A673 (cell line): ENCODE measurements at regions of chr6 and their contacts with region 1.

Region 1: DNA sequence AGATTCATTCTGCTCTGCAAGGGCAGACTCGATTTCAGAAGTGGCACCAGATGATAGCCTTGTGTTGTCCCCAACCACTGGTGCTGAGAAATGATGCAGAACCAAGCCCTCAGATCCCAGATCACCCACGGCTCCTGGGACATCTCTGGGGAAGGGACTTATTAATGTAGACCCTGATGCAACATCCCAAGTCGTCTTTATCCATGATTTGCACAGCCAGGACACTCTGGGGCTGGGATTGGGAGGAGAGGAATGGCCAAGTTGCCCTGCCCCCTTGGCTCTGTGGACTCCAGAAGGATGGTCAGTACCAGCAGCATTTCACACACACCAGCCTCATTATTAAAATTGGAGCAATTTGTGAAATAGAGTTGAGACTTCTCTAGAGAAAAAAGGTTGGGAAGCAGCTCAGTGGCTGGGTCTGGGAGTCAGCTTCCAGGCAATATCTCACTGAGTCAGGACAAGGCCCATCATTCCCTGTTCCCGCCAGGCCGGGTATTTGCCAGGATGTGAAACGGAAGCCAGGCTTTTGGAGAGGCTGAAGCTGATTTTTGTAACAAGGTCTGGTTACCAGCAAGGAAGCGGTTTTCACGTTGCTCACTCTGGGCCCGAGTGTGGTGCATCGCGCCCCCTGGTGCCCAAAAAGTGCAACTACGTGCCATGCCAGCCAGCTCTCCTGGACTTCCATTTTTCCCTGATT is 67.4 kb downstream of the ZBTB2 start:
- DNase-seq: peak; percentile 90
- H3K4me3 ChIP-seq: peak overlapping the region; percentile 74
- H3K27ac ChIP-seq: peak overlapping the region; percentile 75
- H3K4me1 ChIP-seq: peaks cover 24% of the 10 kb centered on the region
- H3K27me3 ChIP-seq: no peaks in the 10 kb centered on the region
- CTCF ChIP-seq: peak; percentile 97

Region 2: DNA sequence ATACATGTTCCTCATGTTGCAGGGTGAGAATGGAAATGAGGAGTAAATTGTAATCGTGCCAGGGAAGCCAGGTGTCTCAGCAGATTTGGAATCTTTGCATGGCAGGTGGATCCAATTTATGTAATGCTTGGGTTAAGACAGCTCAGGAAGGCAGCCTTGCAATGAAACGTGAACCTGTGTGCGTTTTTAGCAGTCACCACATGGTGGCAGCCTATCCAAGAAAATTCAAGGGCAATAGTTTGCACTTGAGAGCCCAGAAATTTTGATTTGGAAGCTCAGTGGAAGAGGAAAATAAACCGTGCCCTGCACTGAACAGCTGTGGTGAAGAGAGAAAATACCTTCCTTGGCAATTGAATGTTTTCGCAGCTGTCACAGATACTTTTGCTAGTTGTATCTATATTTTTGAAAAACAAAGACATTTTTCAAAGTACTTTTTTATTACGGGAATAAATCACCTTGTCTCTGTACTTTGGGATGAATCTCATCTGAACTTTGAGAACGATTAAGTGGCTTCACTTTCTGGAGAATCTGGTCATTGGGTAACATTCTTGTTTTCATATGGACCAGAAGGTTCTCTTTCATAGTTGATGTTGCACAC is 432.0 kb before region 1 on chr6:
- CTCF ChIA-PET with region 1: interaction called, 50 read pairs
- POLR2A ChIA-PET with region 1: no interaction called
- intact Hi-C with region 1: loop called (anchors 1 kb)
- DNase-seq: peak; percentile 81
- H3K4me3 ChIP-seq: no peak overlapping the region
- H3K27ac ChIP-seq: no peak overlapping the region
- H3K4me1 ChIP-seq: peaks cover 24% of the 10 kb centered on the region
- H3K27me3 ChIP-seq: no peaks in the 10 kb centered on the region
- CTCF ChIP-seq: peak; percentile 91

Region 3: GRCh38 chr6:151014404-151015100 is 309.4 kb before region 1 on chr6:
- CTCF ChIA-PET with region 1: interaction called, 54 read pairs
- POLR2A ChIA-PET with region 1: no interaction called
- intact Hi-C with region 1: loop called (anchors 2 kb)
- DNase-seq: peak; percentile 56
- H3K4me3 ChIP-seq: no peak overlapping the region
- H3K27ac ChIP-seq: no peak overlapping the region
- H3K4me1 ChIP-seq: peaks cover 3% of the 10 kb centered on the region
- H3K27me3 ChIP-seq: no peaks in the 10 kb centered on the region
- CTCF ChIP-seq: peak; percentile 96

Region 4: DNA sequence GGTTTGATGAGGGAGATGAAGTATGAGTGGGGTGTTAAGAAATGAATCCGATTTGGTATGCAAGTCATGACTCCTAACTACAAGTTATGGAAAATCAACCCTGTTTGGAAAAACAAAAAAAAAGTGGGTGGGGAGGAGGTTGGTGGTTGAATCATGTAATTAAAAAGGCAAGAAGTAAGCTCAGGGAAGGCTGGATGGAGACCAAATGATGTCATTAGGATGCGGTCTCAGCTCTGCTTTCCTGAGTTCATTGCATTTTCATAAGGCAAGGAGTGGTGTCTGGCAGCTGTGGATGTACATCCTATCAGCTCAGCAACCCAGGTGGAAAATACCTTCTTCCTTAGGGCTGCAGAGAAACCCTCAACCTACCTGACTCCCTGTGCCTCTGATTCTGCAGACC is 144.6 kb before region 1 on chr6:
- CTCF ChIA-PET with region 1: no interaction called
- POLR2A ChIA-PET with region 1: no interaction called
- intact Hi-C with region 1: no loop called
- DNase-seq: no peak
- H3K4me3 ChIP-seq: no peak overlapping the region
- H3K27ac ChIP-seq: no peak overlapping the region
- H3K4me1 ChIP-seq: no peaks in the 10 kb centered on the region
- H3K27me3 ChIP-seq: no peaks in the 10 kb centered on the region
- CTCF ChIP-seq: no peak

Region 5: GRCh38 chr6:151240036-151240685 is 83.8 kb before region 1 on chr6:
- CTCF ChIA-PET with region 1: no interaction called
- POLR2A ChIA-PET with region 1: no interaction called
- intact Hi-C with region 1: loop called (anchors 2 kb)
- DNase-seq: peak; percentile 88
- H3K4me3 ChIP-seq: peak overlapping the region; percentile 84
- H3K27ac ChIP-seq: no peak overlapping the region
- H3K4me1 ChIP-seq: peaks cover 15% of the 10 kb centered on the region
- H3K27me3 ChIP-seq: no peaks in the 10 kb centered on the region
- CTCF ChIP-seq: peak; percentile 26; the same call in 1 of the 2 replicates